Posterior cingulate gyrus (tissue), 11 donors: ENCODE measurements at regions of chr6 and their contacts with region 1.

Region 1: GRCh38 chr6:28838634-28839442 is 84.9 kb downstream of the TRIM27 start:
- DNase-seq: peak; percentile 71 to 97 (median 82)

Region 2: DNA sequence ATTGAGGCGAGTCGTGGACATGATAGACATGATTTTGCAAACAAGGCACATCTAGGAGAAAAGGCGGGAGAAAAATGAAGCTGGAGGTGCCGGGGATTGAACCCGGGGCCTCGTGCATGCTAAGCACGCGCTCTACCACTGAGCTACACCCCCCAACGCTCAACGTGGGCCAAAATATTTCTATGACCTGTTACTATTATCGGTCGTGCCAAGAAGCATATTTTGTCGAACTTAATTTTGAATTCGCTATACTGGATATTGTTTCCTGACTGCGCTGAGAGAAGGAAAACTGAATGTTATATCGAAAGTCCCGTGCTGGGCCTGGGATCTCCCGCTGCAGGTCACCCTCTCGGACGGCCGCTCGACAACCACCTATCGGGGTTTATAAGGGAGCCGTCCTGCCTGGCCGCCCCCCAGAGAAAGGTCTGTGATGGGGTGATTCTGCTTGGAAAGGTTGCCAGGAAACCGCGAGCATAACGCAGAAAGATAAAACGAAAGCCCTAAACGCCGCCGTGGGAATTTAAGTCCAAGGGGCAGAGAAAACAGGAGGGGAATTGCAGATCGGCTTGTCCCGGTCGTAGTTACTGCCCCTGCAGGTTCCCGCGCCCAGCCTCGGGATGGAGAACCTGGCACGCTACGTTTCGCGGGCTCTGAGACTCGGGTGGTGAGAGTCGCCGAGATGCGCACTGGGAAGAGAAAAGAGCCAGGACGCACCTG is 24.9 kb after region 1 on chr6:
- intact Hi-C with region 1: loop called (anchors 1 kb)
- DNase-seq: peak; percentile 63 to 96 (median 80)

Region 3: GRCh38 chr6:28887796-28888496 is 49.1 kb after region 1 on chr6:
- intact Hi-C with region 1: no loop called
- DNase-seq: no peak

Region 4: DNA sequence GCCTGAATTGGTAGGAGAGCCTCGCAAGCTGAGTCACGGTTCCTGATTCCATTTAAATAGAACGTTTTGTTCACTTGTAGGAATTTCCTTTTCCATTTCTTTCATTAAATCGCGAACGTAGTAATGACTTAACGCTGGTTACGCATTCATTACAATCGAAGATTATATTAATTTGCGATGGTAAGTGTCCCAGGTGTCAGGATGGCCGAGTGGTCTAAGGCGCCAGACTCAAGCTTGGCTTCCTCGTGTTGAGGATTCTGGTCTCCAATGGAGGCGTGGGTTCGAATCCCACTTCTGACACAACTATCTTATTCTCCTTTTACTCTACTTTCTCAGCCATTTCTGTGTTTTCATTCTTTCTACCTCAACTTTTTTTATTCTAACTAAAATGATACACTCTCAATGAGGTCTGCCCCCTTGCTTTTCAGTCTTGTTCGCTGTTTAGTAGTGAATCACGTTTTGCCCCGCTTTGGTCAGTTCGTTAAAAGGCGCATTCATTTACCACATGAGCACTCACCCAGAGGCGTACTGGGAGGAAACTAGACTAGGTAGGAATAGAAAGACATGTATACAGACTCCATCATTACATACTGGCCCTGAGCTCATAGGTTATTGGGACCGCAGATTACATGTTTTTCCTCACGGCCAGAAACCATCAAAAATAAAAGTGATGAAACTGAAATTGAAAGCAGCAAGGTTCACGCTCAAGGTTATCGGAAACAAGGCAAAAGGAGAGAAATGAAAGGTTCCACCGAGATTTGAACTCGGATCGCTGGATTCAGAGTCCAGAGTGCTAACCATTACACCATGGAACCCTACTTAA is 102.2 kb after region 1 on chr6:
- intact Hi-C with region 1: loop called (anchors 5 kb)
- DNase-seq: peak in 8 of 10 donors; percentile 47 to 91 (median 67)

Region 5: DNA sequence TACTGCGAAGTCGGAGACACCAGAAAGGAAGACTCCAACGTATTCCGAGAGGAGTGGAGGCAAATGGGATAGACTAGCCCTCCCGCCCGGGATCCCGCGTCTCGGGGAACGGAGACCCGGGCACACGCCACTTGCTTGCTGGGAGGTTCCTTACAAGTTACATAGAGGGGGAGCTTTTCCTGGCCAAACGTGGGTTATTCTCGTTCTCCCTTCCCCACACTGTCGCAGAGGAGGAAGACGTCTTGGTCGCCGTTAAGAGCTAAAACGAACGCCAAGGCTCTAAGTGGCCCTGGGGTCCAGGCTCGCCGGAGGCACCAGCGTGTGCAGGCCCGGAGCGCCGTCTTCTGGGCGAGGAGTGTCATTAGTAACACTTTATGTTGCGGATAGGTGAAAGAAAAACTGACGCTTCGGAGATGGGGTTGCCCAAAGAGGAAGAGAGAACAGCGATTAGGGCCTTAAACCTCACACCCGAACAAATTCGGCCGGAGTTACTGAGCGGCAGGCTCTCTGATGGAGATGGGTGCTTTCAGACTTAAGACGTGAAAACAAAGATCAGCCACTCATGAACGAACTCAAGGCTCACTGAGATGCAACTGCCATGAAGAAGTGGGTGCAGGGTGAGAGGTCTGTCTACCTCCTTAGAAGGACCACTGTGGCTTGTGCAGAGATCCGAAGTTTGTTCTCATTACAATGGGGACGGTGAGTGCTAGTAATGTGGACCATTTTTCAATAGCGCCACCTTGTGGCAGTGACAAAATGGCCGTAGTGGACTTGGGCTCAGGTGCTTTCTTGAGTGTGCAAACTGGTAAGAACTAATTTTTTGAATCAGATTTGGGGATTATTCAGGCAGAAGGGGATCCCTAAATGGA is 178.0 kb after region 1 on chr6:
- intact Hi-C with region 1: loop called (anchors 1 kb)
- DNase-seq: peak; percentile 39 to 93 (median 77)